ENCODE measurements at regions of chr7 and their contacts with region 1.

Region 1: GRCh38 chr7:3092468-3092867 is 48.8 kb upstream of the CARD11 start:
- DNase-seq: peak; percentile 11 to 76 (median 38)
- ATAC-seq: peak in 2 of 4 donors; percentile 29 to 71
- H3K4me3 ChIP-seq: no peak overlapping the region
- H3K27ac ChIP-seq: peak overlapping the region in 1 of 12 donors; percentile 81
- H3K4me1 ChIP-seq: peaks cover 0 to 35% (median 0%) of the 10 kb centered on the region in 12 donors
- H3K27me3 ChIP-seq: peaks cover 0 to 6% (median 0%) of the 10 kb centered on the region in 9 donors
- CTCF ChIP-seq: no peak
- POLR2A ChIP-seq: no peak

Region 2: DNA sequence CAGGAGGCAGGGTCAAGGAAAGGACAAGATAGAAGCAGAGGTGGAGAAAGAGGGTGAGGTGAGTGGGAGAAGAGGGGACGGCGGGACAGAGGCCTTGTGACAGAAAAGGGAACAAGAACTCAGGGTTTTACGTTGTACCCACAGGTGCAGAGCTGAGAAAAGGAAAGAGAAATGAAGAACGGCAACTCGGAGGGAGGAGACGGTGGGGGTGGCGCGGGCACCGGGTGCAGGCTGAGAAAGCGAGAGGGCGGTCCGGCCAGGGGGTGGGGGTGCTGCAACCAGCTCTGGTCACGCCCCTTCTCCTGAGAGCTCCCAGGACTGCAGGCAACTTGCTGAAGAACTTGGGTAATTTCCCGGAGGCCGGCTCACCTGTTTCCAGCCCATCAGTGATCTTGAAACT is 114.1 kb before region 1 on chr7:
- intact Hi-C with region 1: no loop called
- DNase-seq: peak in 2 of 5 donors; percentile 29 to 38
- ATAC-seq: no peak
- H3K4me3 ChIP-seq: peak overlapping the region in 1 of 12 donors; percentile 19
- H3K27ac ChIP-seq: no peak overlapping the region
- H3K4me1 ChIP-seq: no peaks in the 10 kb centered on the region
- H3K27me3 ChIP-seq: peaks cover 0 to 40% (median 16%) of the 10 kb centered on the region in 9 donors
- CTCF ChIP-seq: no peak
- POLR2A ChIP-seq: no peak

Region 3: GRCh38 chr7:3033581-3033980 is 58.9 kb before region 1 on chr7:
- intact Hi-C with region 1: loop called in 1 of 10 experiments (anchors 10 kb)
- DNase-seq: no peak
- ATAC-seq: no peak
- H3K4me3 ChIP-seq: no peak overlapping the region
- H3K27ac ChIP-seq: no peak overlapping the region
- H3K4me1 ChIP-seq: no peaks in the 10 kb centered on the region
- H3K27me3 ChIP-seq: peaks cover 0 to 11% (median 0%) of the 10 kb centered on the region in 9 donors
- CTCF ChIP-seq: no peak
- POLR2A ChIP-seq: no peak

Region 4: GRCh38 chr7:3134715-3135114 is 42.2 kb after region 1 on chr7:
- intact Hi-C with region 1: loop called in 1 of 10 experiments (anchors 5 kb)
- DNase-seq: no peak
- ATAC-seq: no peak
- H3K4me3 ChIP-seq: no peak overlapping the region
- H3K27ac ChIP-seq: no peak overlapping the region
- H3K4me1 ChIP-seq: no peaks in the 10 kb centered on the region
- H3K27me3 ChIP-seq: peaks cover 0 to 8% (median 0%) of the 10 kb centered on the region in 9 donors
- CTCF ChIP-seq: no peak
- POLR2A ChIP-seq: no peak

Region 5: GRCh38 chr7:3200504-3200903 is 108.0 kb after region 1 on chr7:
- intact Hi-C with region 1: no loop called
- DNase-seq: no peak
- ATAC-seq: peak in 2 of 4 donors; percentile 45 to 58
- H3K4me3 ChIP-seq: no peak overlapping the region
- H3K27ac ChIP-seq: no peak overlapping the region
- H3K4me1 ChIP-seq: no peaks in the 10 kb centered on the region
- H3K27me3 ChIP-seq: no peaks in the 10 kb centered on the region
- CTCF ChIP-seq: peak in 10 of 12 donors; percentile 11 to 41 (median 30)
- POLR2A ChIP-seq: no peak

Measured in heart left ventricle (tissue), 16 donors.